ENCODE measurements at regions of chr1 and their contacts with region 1.

Region 1: GRCh38 chr1:24201941-24202440 is 14.9 kb upstream of the IFNLR1 start:
- DNase-seq: peak; percentile 94 to 97
- H3K4me3 ChIP-seq: no peak overlapping the region
- CTCF ChIP-seq: peak in 1 of 3 donors; percentile 92
- POLR2A ChIP-seq: no peak

Region 2: GRCh38 chr1:24228311-24228710 is 26.3 kb after region 1 on chr1:
- intact Hi-C with region 1: no loop called
- DNase-seq: no peak
- H3K4me3 ChIP-seq: no peak overlapping the region
- CTCF ChIP-seq: no peak
- POLR2A ChIP-seq: no peak

Region 3: DNA sequence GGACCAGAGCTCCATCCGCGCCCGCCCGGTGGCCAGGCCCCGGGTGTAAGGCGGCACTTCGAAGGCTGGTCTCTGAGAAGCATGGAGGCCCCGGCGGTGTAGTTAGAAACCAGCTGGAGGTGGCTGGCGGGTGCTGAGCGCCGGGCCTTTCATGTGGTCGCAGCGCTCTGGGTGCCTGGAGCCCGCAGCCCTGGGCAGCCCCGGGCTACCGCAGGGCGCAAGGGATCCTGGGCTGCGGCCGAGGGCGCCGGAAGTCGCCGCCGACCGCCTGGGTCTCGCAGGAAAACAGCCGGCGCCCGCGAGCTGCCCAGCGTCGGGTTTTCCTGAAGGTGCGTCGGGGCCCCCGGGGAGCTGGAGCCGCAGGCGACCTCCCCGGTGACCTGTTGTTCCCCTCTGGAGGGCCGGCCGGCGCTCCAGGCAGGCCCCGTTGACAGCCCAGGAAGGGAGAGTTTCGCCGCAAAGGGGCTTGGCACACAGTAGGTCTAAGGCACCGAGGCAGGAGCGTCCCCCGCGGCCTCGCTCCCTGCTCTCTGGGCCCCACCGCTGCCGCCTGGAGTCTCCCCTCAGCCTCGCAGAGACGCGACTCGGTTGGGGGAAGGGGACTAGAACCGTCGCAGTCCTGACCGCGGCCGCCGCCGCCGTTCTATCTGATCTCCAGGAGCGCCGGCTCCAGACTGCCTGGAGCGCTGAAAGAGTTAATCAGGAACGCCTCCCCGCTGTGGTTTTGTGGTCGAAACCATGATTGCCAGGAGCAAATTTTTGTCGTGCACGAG is 119.9 kb after region 1 on chr1:
- intact Hi-C with region 1: loop called (anchors 10 kb)
- DNase-seq: peak; percentile 50 to 89
- H3K4me3 ChIP-seq: peak overlapping the region; percentile 33
- CTCF ChIP-seq: no peak
- POLR2A ChIP-seq: no peak

Region 4: GRCh38 chr1:24384251-24385090 is 182.5 kb after region 1 on chr1:
- intact Hi-C with region 1: no loop called
- DNase-seq: peak in 1 of 2 donors; percentile 85
- H3K4me3 ChIP-seq: no peak overlapping the region
- CTCF ChIP-seq: no peak
- POLR2A ChIP-seq: no peak

Region 5: DNA sequence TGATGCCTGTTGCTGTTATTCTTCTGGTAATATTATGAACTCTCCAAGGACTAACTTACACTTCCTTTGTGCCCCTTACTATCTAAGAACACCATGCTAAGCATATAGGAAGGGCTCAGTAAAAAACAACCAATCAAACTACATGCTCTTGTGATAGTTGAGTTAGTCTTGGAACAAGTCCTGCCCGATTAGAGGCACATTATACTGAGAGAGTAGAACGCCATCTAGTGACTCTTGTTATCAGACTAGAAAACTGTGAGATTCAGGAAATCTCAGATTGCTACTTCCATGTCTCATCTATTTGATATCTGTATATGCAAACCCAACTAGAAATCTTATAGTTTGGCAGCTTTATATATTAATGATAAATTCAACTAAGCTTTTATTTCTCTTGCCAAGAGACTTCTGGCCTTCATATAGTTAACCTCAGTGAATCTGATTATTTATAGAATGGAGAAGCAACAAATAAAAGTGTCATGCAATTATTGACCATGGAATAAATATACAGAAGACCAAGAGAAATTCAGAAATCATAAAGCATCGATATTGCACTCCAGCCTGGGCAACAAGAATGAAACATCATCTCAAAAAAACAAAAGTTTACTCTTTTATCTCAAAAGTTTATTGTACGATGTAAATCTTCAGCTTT is 433.3 kb after region 1 on chr1:
- intact Hi-C with region 1: loop called (anchors 5 kb)
- DNase-seq: no peak
- H3K4me3 ChIP-seq: no peak overlapping the region
- CTCF ChIP-seq: no peak
- POLR2A ChIP-seq: no peak

Measured in lower leg skin (tissue), 4 donors.